Right ventricle myocardium inferior (tissue), 1 donor: ENCODE measurements at regions of chr10 and their contacts with region 1.

Region 1: GRCh38 chr10:110681023-110681681 is 37.0 kb downstream of the RBM20 start:
- DNase-seq: no peak
- ATAC-seq: peak; percentile 43

Region 2: DNA sequence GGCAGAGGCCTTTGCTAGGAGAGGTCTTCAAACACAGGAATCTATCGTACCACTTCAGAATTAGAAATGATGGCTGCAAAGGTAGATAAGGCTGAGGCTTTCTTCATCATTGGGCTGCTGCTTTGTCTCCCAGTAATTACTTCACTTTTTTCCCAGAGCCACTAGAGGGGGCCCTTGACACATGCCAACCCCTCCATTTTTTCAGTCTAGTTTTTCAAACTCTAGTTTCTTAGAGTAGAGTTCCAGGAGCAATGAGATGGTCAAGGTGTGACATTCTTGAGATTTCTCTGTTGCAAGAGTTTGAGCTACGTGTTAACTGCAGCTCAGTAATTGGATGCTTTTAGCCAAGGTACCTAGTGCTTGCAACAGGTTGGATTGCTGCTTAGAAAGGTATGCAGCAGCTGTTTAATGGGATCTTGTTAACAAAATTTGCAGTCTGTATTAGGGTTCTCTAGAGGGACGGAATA is 70.8 kb before region 1 on chr10:
- intact Hi-C with region 1: loop called (anchors 2 kb)
- DNase-seq: no peak
- ATAC-seq: peak; percentile 62

Region 3: DNA sequence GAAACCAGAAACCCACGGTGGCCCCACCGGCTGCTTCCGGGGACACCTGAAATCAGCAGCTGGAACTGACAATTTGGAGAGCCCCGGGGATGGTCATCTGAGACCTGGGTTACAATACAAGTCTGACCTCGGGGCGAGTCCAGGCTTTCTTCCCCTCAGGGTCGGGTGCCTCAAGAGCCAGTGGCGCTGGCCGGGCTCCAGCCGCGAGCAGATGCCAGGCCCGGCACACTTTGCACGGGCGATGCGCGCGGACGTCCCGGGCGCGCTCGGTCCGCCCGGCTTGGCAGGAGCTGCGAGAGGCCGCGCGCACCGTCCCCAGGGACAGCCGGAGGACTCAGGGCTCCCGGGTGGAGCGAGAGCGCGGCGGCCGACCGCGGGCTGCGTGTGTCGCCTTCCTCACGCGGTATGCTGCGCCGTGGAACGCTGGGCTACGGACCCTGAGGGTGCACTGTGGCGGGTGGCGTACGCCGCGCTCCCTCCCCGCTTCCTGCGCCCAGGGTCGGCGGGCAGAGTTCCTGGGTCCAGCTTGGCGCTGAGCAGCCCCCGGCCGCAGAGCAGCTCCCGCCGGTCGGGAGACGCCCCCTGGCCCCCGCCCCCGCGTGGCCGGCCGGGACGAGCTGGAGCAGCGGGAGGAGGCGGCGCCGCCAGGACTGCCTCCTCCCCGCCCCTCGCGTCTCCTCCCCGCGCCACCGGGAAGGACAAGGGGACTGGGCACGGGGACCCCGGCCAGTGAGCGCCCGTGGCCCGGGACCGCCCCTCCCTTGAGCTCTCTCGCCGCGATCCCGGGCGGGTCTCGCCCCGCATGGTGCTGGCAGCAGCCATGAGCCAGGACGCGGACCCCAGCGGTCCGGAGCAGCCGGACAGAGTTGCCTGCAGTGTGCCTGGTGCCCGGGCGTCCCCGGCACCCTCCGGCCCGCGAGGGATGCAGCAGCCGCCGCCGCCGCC is 37.2 kb before region 1 on chr10 and contains the start of gene RBM20:
- intact Hi-C with region 1: loop called (anchors 2 kb)
- DNase-seq: peak; percentile 79
- ATAC-seq: peak; percentile 85
- total RNA-seq, gene RBM20: 103 TPM

Region 4: GRCh38 chr10:110698782-110699201 is 17.6 kb after region 1 on chr10:
- intact Hi-C with region 1: loop called (anchors 1 kb)
- DNase-seq: no peak
- ATAC-seq: peak; percentile 80

Region 5: DNA sequence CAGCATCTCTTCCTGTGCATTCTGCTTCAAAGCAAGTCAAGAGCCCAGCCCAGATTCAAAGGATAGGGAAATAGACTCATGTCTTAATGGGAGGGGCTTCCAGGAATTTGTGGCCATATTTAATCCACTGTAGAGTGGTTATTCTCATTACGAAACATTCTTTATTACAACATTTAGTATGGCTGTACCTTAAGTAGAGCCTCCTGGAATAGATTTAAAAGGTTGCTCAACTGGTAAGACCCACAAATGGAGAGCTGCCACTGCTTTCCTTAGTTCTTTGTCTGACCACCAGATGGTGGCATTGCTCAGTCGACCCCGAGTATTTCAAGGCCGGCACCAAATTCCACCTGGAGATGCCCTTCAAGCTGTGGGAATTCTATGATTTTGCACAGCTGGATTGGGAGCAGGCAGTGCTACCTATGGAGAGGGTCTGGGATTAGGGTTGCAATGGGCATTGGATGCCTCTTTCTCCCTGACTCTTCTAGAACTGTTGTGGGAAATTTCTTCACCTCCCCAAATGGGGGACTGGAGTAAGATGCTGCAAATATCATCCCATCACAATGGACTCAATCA is 65.2 kb after region 1 on chr10:
- intact Hi-C with region 1: loop called (anchors 10 kb)
- DNase-seq: no peak
- ATAC-seq: peak; percentile 46

Region 6: DNA sequence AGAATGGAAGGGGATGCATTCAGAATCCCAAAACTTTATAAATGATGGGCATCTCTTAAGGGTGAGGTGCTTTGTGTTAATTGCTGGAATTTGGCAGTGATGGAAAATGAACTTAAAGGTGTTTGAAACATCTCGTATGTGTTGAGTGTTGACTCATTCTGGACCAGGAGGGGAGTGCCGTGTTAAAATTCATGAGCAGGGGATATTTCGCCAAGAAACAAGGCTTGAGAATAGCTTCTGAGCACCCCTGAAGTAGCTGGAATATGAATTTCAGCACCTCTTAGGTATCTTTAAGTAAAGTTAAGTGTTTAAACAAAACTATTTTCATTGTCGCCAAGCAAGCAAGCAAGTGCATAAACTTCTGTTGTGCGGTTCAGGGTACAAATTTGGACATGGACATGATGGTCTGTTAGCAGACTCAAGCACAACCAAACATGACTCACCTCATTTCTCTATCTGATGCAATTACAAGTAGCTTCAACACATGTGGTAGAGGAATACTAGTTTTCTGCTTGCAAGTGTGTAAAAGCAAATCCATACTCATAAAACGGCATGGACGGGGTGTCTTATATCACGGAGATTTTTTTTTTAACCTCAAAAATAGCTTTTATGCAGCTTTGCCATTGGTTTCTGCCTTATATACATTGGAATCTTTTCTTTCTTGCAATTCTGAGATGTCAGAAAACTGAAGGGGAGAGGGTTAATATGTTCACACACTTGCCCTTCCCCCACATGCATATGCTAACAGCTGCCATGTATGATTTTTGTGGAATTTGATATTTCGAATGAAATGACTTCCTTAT is 84.2 kb after region 1 on chr10:
- intact Hi-C with region 1: no loop called
- DNase-seq: no peak
- ATAC-seq: no peak

Region 7: GRCh38 chr10:110794808-110795207 is 113.7 kb after region 1 on chr10:
- intact Hi-C with region 1: loop called (anchors 5 kb)
- DNase-seq: no peak
- ATAC-seq: peak; percentile 90